Right ventricle myocardium inferior (tissue), 1 donor: ENCODE measurements at regions of chr21 and their contacts with region 1.

Region 1: GRCh38 chr21:36989699-36990507 is 16.6 kb upstream of the RIPPLY3 start:
- DNase-seq: peak; percentile 97
- ATAC-seq: peak; percentile 99

Region 2: DNA sequence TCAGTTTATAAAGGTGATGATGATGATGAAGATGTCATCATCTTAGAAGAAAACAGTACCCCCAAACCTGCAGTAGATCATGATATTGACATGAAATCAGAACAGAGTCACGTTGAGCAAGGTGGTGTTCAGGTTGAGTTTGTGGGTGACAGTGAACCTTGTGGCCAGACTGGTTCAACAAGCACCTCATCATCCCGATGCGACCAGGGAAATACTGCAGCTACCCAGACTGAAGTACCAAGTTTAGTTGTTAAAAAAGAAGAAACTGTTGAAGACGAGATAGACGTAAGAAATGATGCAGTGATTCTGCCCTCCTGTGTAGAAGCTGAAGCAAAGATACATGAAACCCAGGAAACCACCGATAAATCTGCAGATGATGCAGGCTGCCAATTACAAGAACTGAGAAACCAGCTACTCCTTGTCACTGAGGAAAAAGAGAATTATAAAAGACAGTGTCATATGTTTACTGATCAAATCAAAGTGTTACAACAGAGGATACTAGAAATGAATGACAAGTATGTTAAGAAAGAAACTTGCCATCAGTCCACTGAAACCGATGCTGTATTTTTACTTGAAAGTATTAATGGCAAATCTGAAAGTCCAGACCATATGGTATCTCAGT is 620.7 kb before region 1 on chr21:
- intact Hi-C with region 1: no loop called
- DNase-seq: no peak
- ATAC-seq: no peak

Region 3: DNA sequence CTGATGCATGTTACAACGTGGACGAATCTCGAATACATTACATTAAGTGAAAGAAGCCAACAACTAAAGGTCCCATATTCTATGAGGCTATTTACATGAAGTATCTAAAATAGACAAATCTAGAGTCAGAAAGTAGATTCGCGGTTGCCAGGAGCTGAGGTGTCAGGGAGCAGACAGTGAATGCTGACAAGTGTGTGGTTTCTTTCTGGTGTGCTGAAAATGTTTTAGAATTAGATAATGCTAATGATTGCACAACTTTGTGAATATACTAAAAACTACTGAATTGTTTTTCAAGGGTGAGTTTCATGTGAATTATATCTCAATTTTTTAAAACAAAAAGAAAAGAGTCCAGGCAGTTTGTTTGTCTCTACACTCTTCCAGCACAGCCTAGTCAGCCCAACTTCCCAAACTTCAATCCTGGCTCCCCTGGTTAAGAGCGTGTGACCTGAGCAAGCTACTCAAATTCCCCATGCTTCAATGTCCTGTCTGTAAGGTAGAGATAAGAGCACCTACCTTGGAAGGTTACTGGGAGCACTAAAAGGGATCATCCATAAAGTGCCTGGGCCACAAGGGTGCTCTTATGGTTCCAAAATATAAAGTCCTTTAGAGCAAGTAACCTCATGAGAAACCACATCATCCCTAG is 44.3 kb before region 1 on chr21:
- intact Hi-C with region 1: loop called (anchors 5 kb)
- DNase-seq: no peak
- ATAC-seq: no peak

Region 4: DNA sequence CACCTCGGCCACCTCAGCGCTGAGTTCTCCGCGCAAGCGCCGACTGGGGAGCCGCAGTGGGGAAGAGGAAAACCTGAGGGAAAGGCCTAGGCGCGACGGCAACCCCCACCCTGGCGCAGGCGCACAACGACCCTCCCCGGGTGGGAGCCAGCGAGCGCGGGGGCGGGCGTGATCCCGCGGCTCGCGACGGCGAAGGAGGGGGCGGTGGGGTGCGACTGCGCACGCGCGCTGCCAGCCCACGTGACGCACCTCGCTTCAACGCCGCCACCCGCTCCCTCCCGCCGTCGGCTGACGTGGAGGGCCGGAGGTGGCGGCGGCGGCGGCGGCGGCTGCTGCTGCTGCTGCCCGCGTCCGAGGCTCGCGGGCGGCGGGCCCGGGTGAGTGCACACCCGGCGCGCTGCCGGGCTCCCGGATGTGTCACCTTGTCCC is 83.1 kb after region 1 on chr21 and contains the starts of genes PIGP and TTC3:
- intact Hi-C with region 1: loop called (anchors 5 kb)
- DNase-seq: peak; percentile 94
- ATAC-seq: peak; percentile 94
- total RNA-seq, gene PIGP: 40.1 TPM
- total RNA-seq, gene TTC3: 35.8 TPM